Panc1 (cell line): ENCODE measurements at regions of chr3 and their contacts with region 1.

Region 1: GRCh38 chr3:9770276-9770812 is 597 bp upstream of the CAMK1 start:
- DNase-seq: no peak
- ATAC-seq: no peak
- H3K4me3 ChIP-seq: peak overlapping the region; percentile 50 to 54
- H3K27ac ChIP-seq: peak overlapping the region; percentile 48; the same call in 1 of the 2 replicates
- H3K4me1 ChIP-seq: 0 out of 2 replicates have a peak, but pooled peaks cover 3% of the 10 kb centered on the region
- H3K27me3 ChIP-seq: no peaks in the 10 kb centered on the region
- CTCF ChIP-seq: no peak

Region 2: DNA sequence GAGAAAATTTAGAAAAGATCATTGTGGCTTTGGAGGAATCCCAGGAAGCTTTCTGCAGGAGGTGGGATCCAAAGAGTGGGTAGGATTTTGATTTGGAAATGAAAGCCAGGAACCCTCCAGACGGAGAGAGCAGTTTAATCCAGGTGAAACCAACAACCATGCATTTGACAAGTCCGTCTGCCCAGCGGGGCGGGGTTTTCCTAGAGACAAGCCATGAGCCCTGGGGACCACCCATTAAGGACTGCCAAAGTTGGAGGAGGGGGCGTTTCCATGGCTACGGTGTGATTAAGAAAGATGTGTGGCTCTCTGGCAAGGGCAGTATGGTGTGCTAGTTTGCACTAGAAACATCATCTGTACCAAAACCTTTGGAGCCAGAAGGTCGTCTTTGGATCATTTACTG is 574.3 kb before region 1 on chr3:
- CTCF ChIA-PET with region 1: no interaction called
- POLR2A ChIA-PET with region 1: no interaction called
- in situ Hi-C with region 1: no loop called
- intact Hi-C with region 1: no loop called
- DNase-seq: no peak
- ATAC-seq: no peak
- H3K4me3 ChIP-seq: no peak overlapping the region
- H3K27ac ChIP-seq: no peak overlapping the region
- H3K4me1 ChIP-seq: no peaks in the 10 kb centered on the region
- H3K27me3 ChIP-seq: peaks cover 2% of the 10 kb centered on the region; the same call in 1 of the 2 replicates
- CTCF ChIP-seq: no peak

Region 3: GRCh38 chr3:9797196-9797945 is 27.0 kb after region 1 on chr3:
- CTCF ChIA-PET with region 1: no interaction called
- POLR2A ChIA-PET with region 1: interaction called, 13 read pairs
- in situ Hi-C with region 1: no loop called
- intact Hi-C with region 1: no loop called
- DNase-seq: no peak
- ATAC-seq: no peak
- H3K4me3 ChIP-seq: no peak overlapping the region
- H3K27ac ChIP-seq: no peak overlapping the region
- H3K4me1 ChIP-seq: no peaks in the 10 kb centered on the region
- H3K27me3 ChIP-seq: no peaks in the 10 kb centered on the region
- CTCF ChIP-seq: no peak